Heart left ventricle (tissue), 16 donors: ENCODE measurements at regions of chr2 and their contacts with region 1.

Region 1: DNA sequence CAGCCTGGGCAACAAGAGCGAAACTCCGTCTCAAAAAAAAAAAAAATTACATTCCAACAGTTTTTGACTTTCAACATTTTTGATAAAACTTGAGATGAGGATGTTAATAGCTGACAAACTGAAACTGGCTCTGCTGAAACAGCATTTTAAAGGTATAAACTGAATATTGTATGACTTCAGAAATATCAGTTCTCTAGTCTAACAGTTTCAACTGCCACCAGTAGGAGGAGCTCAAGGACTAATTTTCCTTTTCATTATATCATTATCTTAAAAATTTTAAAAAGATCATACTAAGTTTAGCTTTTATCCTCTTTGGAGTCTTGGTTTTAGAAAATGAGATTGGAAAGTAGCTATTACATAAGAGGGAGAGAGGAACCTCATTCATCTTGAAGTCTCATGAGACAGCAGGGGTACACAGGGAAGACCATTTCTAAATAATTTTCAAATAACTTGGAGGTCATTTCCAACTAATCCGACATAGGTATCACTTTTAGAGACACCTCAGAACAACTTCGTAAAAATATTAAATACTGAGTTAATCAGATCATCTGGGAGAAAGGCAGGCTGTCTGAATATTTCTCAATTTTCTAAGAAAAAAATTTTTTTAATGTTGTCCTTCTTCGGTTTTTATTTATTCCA is 37.6 kb upstream of the MCM6 start:
- DNase-seq: peak in 1 of 5 donors; percentile 16
- ATAC-seq: no peak
- H3K4me3 ChIP-seq: no peak overlapping the region
- H3K27ac ChIP-seq: no peak overlapping the region
- H3K4me1 ChIP-seq: no peaks in the 10 kb centered on the region
- H3K27me3 ChIP-seq: no peaks in the 10 kb centered on the region
- CTCF ChIP-seq: peak; percentile 66 to 87 (median 77)
- POLR2A ChIP-seq: no peak

Region 2: GRCh38 chr2:135762022-135762421 is 151.8 kb before region 1 on chr2:
- intact Hi-C with region 1: no loop called
- DNase-seq: no peak
- ATAC-seq: no peak
- H3K4me3 ChIP-seq: no peak overlapping the region
- H3K27ac ChIP-seq: no peak overlapping the region
- H3K4me1 ChIP-seq: no peaks in the 10 kb centered on the region
- H3K27me3 ChIP-seq: no peaks in the 10 kb centered on the region
- CTCF ChIP-seq: no peak
- POLR2A ChIP-seq: no peak

Region 3: GRCh38 chr2:136378712-136379595 is 465.1 kb after region 1 on chr2:
- intact Hi-C with region 1: loop called (anchors 1 to 5 kb)
- DNase-seq: peak; percentile 33 to 61 (median 43)
- ATAC-seq: peak; percentile 63 to 80 (median 76)
- H3K4me3 ChIP-seq: no peak overlapping the region
- H3K27ac ChIP-seq: no peak overlapping the region
- H3K4me1 ChIP-seq: peaks cover 0 to 33% (median 1%) of the 10 kb centered on the region in 12 donors
- H3K27me3 ChIP-seq: no peaks in the 10 kb centered on the region
- CTCF ChIP-seq: peak; percentile 50 to 79 (median 68)
- POLR2A ChIP-seq: no peak

Region 4: GRCh38 chr2:136384531-136385303 is 470.9 kb after region 1 on chr2:
- intact Hi-C with region 1: loop called in 8 of 10 experiments (anchors 1 to 5 kb)
- DNase-seq: no peak
- ATAC-seq: peak; percentile 60 to 88 (median 78)
- H3K4me3 ChIP-seq: no peak overlapping the region
- H3K27ac ChIP-seq: no peak overlapping the region
- H3K4me1 ChIP-seq: peaks cover 0 to 13% (median 0%) of the 10 kb centered on the region in 12 donors
- H3K27me3 ChIP-seq: no peaks in the 10 kb centered on the region
- CTCF ChIP-seq: peak; percentile 28 to 67 (median 50)
- POLR2A ChIP-seq: no peak

Region 5: DNA sequence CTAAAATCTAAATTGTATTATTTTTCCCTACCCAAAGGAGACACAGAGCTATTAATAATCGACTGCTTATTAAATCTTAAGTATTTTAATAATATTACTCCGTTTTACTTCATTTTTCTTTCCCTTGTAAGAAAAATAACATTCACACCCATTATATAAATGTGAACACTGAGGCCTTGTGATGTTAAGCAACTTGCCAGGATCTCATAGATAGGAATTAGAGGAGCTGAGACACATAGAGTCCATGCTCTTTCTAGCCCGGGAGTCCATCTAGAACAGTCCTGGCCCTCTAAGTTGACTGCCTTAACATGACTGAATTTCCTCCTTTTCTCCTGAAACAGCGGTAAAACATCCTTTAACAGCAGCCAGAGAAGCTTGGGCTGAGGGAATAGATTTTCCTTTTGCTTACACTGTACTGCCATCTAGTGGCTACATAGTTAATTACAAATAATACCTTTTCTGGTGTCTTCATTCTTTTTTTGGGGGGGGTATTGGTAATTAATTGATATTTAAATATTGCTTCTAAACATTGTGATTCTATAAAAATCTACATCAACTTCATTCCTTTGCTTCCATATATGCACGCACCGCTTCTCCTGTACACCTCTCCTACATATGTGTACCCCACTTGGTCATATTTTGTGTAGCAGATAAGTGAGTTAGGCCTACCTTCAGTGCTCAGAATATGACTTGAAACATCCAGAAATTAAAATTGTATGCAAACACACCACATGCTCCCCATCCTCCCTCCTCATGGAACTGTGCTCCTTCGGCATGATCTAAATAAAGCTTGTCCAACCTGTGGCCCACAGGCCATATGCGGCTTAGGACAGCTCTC is 1924.6 kb after region 1 on chr2:
- intact Hi-C with region 1: loop called in 2 of 10 experiments (anchors 5 to 10 kb)
- DNase-seq: no peak
- ATAC-seq: no peak
- H3K4me3 ChIP-seq: no peak overlapping the region
- H3K27ac ChIP-seq: no peak overlapping the region
- H3K4me1 ChIP-seq: no peaks in the 10 kb centered on the region
- H3K27me3 ChIP-seq: peaks cover 0 to 3% (median 0%) of the 10 kb centered on the region in 9 donors
- CTCF ChIP-seq: peak; percentile 54 to 80 (median 68)
- POLR2A ChIP-seq: no peak